ENCODE measurements at regions of chr3 and their contacts with region 1.

Region 1: DNA sequence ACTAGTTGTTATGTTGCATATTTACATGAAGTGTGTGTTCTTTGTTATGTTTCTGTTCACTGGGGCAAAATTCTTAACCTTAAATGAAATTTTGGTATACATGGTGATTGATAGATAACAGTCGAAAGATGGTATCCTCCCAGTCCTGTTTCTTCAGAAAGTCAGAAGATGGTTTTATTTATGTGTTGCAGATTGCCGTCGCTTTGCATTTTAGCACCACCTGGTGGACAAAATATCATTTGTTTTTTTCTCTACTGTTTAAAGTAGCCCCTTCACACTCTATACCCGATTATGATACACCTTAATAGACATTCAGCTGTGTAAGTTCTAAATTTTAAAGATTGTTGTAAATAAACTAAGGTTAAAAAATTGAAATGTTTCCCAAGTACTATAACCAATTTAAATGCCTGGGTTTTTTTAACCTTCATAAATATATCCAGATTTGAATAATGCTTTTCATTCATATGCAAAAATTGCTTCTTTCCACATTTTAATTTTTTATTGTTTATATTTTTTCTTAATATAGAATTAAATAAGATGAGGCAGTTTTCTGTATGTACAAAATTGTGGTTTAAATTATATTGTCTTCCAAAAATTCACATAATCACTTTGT is 152.2 kb downstream of the ALCAM start:
- DNase-seq: no peak
- H3K4me3 ChIP-seq: no peak overlapping the region
- H3K27ac ChIP-seq: no peak overlapping the region
- H3K4me1 ChIP-seq: peaks cover 0 to 2% (median 0%) of the 10 kb centered on the region in 4 donors
- H3K27me3 ChIP-seq: no peaks in the 10 kb centered on the region
- CTCF ChIP-seq: peak; percentile 59 to 68 (median 60)
- EP300 ChIP-seq: no peak
- POLR2A ChIP-seq: no peak

Region 2: DNA sequence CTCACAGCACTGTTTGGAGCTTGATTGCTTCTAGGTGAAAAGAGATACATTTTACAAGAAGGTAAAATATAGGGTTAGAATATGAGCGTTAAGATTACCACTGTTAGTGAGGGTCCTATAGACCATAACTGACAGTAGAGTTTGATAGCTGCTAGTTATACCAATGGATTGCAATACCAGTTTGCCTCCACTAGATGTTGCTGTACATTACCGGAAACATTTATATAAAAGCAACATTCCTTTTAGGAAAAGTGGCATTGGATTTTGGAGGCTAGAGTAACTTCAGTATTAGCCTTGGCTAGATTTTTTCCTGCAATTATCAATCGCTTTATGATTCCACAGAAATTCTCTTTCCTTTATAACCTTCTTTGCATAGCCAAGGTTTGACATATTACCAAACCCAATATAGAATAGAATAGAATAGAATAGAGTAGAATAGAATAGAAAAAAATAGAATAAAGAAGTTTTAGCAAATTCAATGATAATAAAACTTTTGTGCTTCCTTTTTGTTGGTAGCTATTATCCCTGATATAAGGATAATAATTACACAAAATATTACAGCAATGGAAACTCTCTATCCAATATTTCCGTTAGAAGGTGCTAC is 1245.8 kb before region 1 on chr3:
- in situ Hi-C with region 1: loop called in 1 of 4 experiments (anchors 25 kb)
- intact Hi-C with region 1: no loop called
- DNase-seq: no peak
- H3K4me3 ChIP-seq: no peak overlapping the region
- H3K27ac ChIP-seq: no peak overlapping the region
- H3K4me1 ChIP-seq: no peaks in the 10 kb centered on the region
- H3K27me3 ChIP-seq: no peaks in the 10 kb centered on the region
- CTCF ChIP-seq: peak; percentile 37 to 52 (median 45)
- EP300 ChIP-seq: no peak
- POLR2A ChIP-seq: no peak